ENCODE measurements at regions of chr12 and their contacts with region 1.

Region 1: DNA sequence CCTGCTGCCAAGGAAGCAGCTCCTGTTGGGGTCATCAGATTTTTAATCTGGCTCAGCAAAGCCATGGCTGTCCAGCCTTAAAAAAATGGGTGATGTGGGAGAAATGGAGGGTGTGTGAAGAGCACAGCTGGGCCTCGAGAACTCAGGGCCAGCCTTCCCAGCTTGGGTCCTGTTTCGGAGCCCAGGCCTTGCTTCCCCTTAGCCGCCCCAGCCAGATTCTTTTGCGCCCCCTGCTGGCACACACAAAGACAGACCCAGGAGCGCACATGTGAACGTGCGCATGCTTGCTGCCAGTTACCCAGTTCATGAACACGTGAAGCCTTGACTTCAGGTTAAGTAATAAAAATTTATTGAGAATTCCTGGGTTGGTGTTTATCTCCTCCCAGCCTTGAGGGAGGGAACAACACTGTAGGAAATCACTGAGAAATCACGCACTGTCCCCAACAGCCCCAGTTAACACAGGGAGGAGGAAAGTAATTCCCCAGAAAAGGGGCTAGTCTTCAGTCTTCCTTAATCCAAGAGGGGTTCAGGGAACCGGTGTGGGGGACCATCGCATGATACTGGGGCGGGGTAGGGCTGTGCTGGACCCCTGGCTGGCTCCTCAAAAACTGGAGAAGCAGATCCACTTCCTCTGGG is 5.3 kb downstream of the PHB2 start:
- DNase-seq: peak; percentile 92
- ATAC-seq: peak; percentile 35
- H3K4me3 Mint-ChIP-seq: peak overlapping the region; percentile 0
- H3K27ac Mint-ChIP-seq: peak overlapping the region; percentile 91
- H3K4me1 Mint-ChIP-seq: peaks cover 76% of the 10 kb centered on the region
- H3K27me3 Mint-ChIP-seq: no peaks in the 10 kb centered on the region
- CTCF ChIP-seq: peak; percentile 95

Region 2: GRCh38 chr12:6937481-6938297 is 27.5 kb before region 1 on chr12:
- CTCF ChIA-PET with region 1: interaction called, 460 read pairs
- POLR2A ChIA-PET with region 1: interaction called, 1,266 read pairs
- intact Hi-C with region 1: no loop called
- DNase-seq: peak; percentile 96
- ATAC-seq: peak; percentile 88
- H3K4me3 Mint-ChIP-seq: peak overlapping the region; percentile 83
- H3K27ac Mint-ChIP-seq: peak overlapping the region; percentile 98
- H3K4me1 Mint-ChIP-seq: peaks cover 54% of the 10 kb centered on the region
- H3K27me3 Mint-ChIP-seq: no peaks in the 10 kb centered on the region
- CTCF ChIP-seq: peak; percentile 89

Region 3: GRCh38 chr12:6953442-6954315 is 11.5 kb before region 1 on chr12:
- CTCF ChIA-PET with region 1: interaction called, 460 read pairs
- POLR2A ChIA-PET with region 1: interaction called, 1,266 read pairs
- intact Hi-C with region 1: no loop called
- DNase-seq: peak; percentile 88
- ATAC-seq: peak; percentile 18
- H3K4me3 Mint-ChIP-seq: peak overlapping the region; percentile 95
- H3K27ac Mint-ChIP-seq: peak overlapping the region; percentile 93
- H3K4me1 Mint-ChIP-seq: peaks cover 63% of the 10 kb centered on the region
- H3K27me3 Mint-ChIP-seq: no peaks in the 10 kb centered on the region
- CTCF ChIP-seq: no peak